HEK293 (cell line): ENCODE measurements at regions of chr5 and their contacts with region 1.

Region 1: DNA sequence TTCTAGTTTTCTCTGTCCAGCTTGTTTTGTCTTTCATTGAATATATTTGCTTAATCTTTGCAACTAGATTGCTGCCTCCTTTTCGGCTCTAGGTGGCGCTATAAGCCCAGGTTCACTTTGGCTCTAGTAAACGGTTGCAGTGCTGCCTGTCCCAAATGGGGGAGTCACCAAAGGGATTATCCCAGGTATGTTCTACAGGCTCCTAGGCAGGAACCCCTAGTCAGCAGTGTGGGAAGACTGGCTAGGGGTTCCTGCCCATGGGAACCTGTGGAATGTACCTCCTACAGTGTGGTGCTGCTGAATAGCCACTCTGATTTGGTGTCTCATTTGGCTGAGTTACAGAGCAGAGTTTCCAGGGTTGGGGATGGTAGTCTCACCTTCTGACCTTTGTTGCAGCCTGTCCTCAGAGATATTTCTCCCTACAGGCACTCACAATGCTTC is 85.2 kb downstream of the ARSB start:
- H3K4me3 ChIP-seq: no peak overlapping the region
- H3K27ac ChIP-seq: no peak overlapping the region
- H3K4me1 ChIP-seq: no peaks in the 10 kb centered on the region
- CTCF ChIP-seq: 0 out of 2 replicates have a peak, but pooled peaks have one; percentile 10

Region 2: GRCh38 chr5:78634634-78635033 is 265.3 kb before region 1 on chr5:
- CTCF ChIA-PET with region 1: no interaction called
- POLR2A ChIA-PET with region 1: no interaction called
- H3K4me3 ChIP-seq: no peak overlapping the region
- H3K27ac ChIP-seq: no peak overlapping the region
- H3K4me1 ChIP-seq: peaks cover 23% of the 10 kb centered on the region
- CTCF ChIP-seq: no peak

Region 3: DNA sequence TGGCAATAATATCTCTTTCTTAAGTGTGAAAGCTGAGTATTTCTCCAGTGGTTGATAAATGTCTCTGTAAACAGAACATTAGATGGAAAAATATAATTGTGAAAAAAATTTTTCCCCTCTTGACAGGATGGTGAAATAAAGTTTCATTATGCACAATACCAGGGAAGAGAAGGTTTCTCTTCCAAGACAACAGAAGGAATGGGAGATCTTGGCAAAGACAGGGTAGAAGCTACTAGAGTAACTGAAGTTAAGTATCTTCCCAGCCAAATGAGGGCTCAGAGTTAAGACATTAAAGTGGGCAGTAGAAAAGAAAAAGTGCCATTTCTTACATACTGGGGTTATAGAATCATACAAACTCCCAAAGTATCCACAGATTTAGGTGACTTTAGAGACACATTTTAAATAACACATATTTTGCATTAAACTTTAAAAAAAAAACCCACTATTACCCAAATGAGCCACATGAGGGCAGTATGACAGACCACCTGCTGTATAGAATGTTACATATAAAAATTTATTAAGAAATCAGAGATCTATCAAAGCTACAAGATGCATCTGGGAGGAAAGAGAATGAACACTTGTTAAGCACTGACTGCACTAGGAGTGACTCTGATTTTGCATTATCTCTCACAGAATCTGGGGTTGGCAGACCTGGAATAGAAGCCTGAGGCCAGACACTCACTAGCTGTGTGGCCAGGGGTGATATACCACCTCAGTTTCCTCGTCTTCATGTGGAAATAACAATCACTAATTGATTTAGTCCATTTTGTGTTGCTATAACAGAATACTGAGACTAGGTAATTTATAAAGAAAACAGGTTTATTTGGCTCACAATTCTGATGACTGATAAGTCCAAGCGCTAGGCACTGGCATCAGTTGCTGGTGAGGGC is 13.4 kb before region 1 on chr5:
- CTCF ChIA-PET with region 1: interaction called, 10 read pairs
- POLR2A ChIA-PET with region 1: no interaction called
- H3K4me3 ChIP-seq: no peak overlapping the region
- H3K27ac ChIP-seq: no peak overlapping the region
- H3K4me1 ChIP-seq: no peaks in the 10 kb centered on the region
- CTCF ChIP-seq: no peak

Region 4: DNA sequence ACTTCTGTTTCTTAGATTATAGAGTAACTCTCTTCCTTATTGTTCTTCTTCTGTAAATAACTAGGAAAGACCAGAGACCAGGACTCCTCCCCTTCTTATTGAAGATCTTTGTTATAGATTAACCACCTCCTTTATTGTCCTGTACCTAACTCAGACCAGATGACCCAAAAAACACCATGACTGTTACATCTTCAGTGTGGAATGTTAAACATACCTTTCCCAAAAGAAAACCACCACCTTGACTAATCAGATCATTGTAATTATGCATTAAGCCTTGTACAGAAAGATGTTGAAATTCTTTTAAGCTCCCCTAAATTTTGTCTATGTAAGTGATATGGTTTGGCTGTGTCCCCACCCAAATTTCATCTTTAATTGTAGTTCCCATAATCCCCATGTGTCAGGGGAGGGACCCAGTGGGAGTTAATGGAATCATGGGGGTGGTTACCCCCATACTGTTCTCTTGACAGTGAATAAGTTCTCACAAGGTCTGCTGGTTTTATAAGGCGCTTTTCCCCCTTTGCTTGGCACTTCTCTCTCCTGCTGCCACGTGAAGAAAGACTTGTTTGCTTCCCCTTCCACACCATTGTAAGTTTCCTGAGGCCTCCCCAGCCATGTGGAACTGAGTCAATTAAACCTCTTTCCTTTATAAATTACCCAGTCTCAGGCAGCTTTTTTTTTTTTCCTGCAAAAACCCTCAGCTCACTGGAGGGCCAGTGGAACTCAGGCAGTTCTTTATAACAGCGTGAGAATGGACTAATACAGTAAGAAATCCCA is 58.9 kb after region 1 on chr5:
- CTCF ChIA-PET with region 1: interaction called, 151 read pairs
- POLR2A ChIA-PET with region 1: no interaction called
- H3K4me3 ChIP-seq: no peak overlapping the region
- H3K27ac ChIP-seq: no peak overlapping the region
- H3K4me1 ChIP-seq: no peaks in the 10 kb centered on the region
- CTCF ChIP-seq: no peak

Region 5: DNA sequence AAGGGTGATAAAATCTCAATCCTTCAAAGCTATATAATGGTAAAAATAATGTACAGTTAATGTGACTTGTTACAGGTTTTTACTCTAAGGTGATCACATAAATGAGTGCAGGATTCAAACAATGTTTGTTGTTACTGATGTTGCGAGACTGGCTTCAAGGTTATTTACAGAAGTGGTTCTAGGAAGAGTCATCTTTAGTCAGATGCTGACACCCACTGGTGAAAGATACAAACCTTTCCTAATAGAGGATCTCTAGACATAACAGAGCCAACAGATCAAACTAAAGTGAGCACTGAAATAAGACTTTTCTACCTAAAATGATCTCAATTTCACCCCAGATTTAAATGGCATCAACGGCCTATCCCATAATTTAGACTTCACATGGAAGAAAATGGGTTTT is 64.9 kb after region 1 on chr5:
- CTCF ChIA-PET with region 1: interaction called, 151 read pairs
- POLR2A ChIA-PET with region 1: no interaction called
- H3K4me3 ChIP-seq: no peak overlapping the region
- H3K27ac ChIP-seq: no peak overlapping the region
- H3K4me1 ChIP-seq: no peaks in the 10 kb centered on the region
- CTCF ChIP-seq: 0 out of 2 replicates have a peak, but pooled peaks have one; percentile 41

Region 6: DNA sequence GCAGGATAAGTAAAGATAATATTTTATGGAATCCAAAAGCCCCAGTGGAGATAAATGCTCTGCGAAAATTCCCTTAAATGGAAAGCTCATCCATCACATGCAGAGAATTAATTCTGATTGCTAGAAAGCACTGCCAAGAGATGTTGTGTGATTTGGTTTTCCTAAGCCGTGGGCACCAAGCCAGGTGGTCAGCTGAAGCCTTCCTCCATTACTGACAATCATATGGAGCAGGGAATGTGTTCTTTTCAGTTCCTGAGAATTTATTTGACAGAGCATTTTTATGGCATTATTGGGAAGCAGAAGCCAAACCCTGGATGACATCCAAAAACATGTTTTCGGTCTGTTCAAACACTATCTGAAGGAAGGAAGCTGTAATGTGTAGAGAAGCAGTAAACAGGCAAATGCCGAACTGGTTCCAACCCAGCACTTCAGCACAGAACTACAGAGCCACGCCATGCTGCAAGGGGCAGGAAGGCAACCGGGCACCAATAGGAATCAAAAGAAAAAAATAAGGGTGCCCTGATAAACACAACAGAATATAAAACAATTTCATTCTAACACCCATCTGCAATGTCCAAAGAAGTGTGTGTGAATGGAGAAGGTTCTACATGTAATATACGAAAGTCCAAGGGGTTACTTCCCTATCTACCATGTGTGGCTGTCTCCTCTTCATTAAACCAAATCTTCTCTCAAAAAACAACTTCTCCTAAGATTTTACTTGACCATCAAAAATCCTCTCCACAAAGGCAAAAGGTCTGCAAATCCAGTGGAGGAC is 72.9 kb after region 1 on chr5:
- CTCF ChIA-PET with region 1: interaction called, 151 read pairs
- POLR2A ChIA-PET with region 1: no interaction called
- H3K4me3 ChIP-seq: no peak overlapping the region
- H3K27ac ChIP-seq: 0 out of 2 replicates have a peak overlapping the region, but pooled peaks have one; percentile 32
- H3K4me1 ChIP-seq: peaks cover 20% of the 10 kb centered on the region
- CTCF ChIP-seq: no peak